ENCODE measurements at regions of chr20 and their contacts with region 1.

Region 1: GRCh38 chr20:35092524-35093266 is at the start of gene TRPC4AP:
- DNase-seq: peak; percentile 78 to 96 (median 86)
- ATAC-seq: peak; percentile 98
- H3K4me3 ChIP-seq: peak within 1 kb of the TSS; percentile 99
- H3K4me3 Mint-ChIP-seq: peak within 1 kb of the TSS; percentile 91
- H3K27ac ChIP-seq: peak within 1 kb of the TSS; percentile 72 to 76
- H3K27ac Mint-ChIP-seq: peak within 1 kb of the TSS; percentile 83
- H3K4me1 ChIP-seq: peaks cover 40% of the 10 kb centered on the region
- H3K4me1 Mint-ChIP-seq: peaks cover 53% of the 10 kb centered on the region
- H3K27me3 ChIP-seq: no peaks in the 10 kb centered on the region
- H3K27me3 Mint-ChIP-seq: no peaks in the 10 kb centered on the region
- CTCF ChIP-seq: peak; percentile 85
- total RNA-seq, gene TRPC4AP: 56.3 to 60.6 TPM

Region 2: DNA sequence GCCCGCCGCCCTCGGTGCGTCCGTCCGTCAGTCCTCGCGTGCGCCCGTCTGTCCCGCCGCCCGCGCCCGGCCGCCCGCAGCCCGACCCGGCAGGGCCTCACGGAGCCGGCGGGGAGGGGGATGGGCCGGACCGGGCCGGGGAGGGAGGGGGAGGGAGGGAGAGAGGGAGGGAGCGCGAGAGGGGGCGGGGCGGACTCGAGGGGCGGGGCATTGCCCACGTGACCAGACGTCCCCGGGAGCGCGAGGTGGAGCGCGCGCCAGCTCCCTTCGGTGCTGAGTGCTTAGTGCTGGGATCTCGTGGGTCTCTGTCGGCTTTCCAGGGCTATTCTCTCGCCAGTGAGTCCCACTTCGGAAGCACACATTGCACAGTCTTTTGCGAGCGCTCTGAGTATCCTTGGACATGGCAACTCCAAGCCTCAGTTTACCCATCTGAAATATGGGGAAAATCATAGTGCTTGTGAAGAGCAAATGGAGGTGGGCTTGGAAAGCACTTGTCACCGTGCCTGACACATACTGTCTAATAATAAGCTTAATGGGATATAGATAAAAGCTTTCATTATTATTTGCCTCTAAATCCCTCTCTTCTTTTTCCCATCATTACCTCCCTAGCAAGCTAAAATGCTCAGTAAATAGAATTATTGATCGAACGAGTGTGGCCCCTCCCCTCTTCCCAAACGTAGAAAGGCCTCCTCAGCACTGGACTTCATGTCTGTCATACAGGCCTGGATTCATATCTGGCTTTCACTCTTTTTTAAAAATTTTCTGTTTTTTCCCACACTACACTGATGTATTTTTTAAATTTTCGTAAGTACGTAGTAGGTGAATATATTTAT is 266.9 kb before region 1 on chr20 and contains the start of gene NCOA6:
- CTCF ChIA-PET with region 1: no interaction called
- POLR2A ChIA-PET with region 1: no interaction called
- intact Hi-C with region 1: loop called in 1 of 2 experiments (anchors 5 kb)
- DNase-seq: peak; percentile 77 to 95 (median 84)
- ATAC-seq: peak; percentile 75
- H3K4me3 ChIP-seq: peak within 1 kb of the TSS; percentile 70
- H3K4me3 Mint-ChIP-seq: peak within 1 kb of the TSS; percentile 99
- H3K27ac ChIP-seq: peak within 1 kb of the TSS; percentile 35 to 66
- H3K27ac Mint-ChIP-seq: peak within 1 kb of the TSS; percentile 92
- H3K4me1 ChIP-seq: peaks cover 35% of the 10 kb centered on the region
- H3K4me1 Mint-ChIP-seq: peaks cover 47% of the 10 kb centered on the region
- H3K27me3 ChIP-seq: no peaks in the 10 kb centered on the region
- H3K27me3 Mint-ChIP-seq: no peaks in the 10 kb centered on the region
- CTCF ChIP-seq: no peak
- total RNA-seq, gene NCOA6: 14.6 to 16.3 TPM

Region 3: DNA sequence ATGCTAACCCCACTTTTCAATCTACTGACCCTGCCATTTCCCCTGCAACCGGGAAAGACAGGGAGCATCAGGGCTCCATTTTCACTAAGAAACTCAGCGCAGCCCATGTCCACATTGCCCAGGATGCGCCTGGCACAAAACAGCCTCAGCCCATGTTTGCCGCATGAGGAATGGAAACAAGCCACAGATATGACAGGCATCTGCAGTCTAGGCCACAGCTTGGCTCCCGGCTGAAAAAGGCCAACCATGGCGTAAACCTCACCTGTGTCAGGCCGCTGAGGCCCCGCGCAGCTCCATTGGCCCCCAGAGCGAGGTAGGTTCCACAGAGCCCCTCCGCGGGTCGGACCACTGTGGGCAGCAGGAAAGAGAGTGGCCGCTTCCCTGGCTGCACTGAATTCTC is 241.7 kb before region 1 on chr20:
- CTCF ChIA-PET with region 1: no interaction called
- POLR2A ChIA-PET with region 1: no interaction called
- intact Hi-C with region 1: no loop called
- DNase-seq: no peak
- ATAC-seq: no peak
- H3K4me3 ChIP-seq: no peak overlapping the region
- H3K4me3 Mint-ChIP-seq: no peak overlapping the region
- H3K27ac ChIP-seq: no peak overlapping the region
- H3K27ac Mint-ChIP-seq: no peak overlapping the region
- H3K4me1 ChIP-seq: no peaks in the 10 kb centered on the region
- H3K4me1 Mint-ChIP-seq: no peaks in the 10 kb centered on the region
- H3K27me3 ChIP-seq: no peaks in the 10 kb centered on the region
- H3K27me3 Mint-ChIP-seq: no peaks in the 10 kb centered on the region
- CTCF ChIP-seq: no peak

Region 4: DNA sequence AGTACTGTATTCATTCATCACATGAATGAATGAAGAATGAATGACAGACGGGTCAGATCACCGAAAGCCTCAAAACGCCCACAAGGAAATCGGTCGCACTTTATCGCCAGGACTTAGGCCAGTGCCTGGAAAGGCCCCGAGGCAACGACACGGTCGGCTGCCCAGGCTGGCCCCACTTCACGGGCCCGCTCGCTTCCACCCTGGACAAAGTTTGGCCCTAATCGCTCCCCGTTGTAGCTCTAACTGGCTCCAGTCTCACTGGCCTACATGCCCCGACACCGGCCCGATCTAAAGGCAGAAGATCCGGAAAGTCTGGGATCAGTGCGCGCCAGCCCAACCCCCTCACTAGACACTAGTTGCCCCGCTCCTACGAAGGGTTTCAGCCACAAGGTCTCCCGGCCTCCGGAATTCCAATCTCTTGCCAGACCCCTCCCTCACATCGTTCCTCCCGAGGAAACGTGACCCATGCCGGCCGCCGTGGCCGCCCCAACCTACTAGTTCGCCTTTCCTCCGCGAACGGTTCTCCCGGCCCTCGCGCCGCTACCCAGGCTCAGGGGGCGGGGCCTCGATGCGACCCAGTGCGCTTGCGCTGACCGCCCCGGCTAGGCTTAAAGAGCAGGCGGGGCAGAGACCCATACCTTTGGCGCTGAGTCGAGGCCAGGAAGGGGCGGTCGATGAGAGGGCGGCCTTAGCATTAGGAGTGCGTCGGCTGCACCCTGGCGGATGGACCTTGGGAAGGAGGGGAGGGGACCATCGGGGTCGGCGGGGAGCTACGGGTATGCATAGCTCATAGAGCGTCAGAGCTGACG is 137.3 kb before region 1 on chr20 and contains the starts of genes GSS and MYH7B:
- CTCF ChIA-PET with region 1: interaction called, 5 read pairs
- POLR2A ChIA-PET with region 1: no interaction called
- intact Hi-C with region 1: loop called in 1 of 2 experiments (anchors 2 kb)
- DNase-seq: peak; percentile 90 to 98 (median 96)
- ATAC-seq: peak; percentile 92
- H3K4me3 ChIP-seq: peak within 1 kb of the TSS; percentile 87
- H3K4me3 Mint-ChIP-seq: peak within 1 kb of the TSS; percentile 94
- H3K27ac ChIP-seq: peak within 1 kb of the TSS; percentile 62 to 70
- H3K27ac Mint-ChIP-seq: peak within 1 kb of the TSS; percentile 91
- H3K4me1 ChIP-seq: peaks cover 19% of the 10 kb centered on the region
- H3K4me1 Mint-ChIP-seq: peaks cover 23% of the 10 kb centered on the region
- H3K27me3 ChIP-seq: no peaks in the 10 kb centered on the region
- H3K27me3 Mint-ChIP-seq: no peaks in the 10 kb centered on the region
- CTCF ChIP-seq: no peak
- total RNA-seq, gene GSS: 24.3 to 24.7 TPM
- total RNA-seq, gene MYH7B: 0.53 to 0.58 TPM

Region 5: DNA sequence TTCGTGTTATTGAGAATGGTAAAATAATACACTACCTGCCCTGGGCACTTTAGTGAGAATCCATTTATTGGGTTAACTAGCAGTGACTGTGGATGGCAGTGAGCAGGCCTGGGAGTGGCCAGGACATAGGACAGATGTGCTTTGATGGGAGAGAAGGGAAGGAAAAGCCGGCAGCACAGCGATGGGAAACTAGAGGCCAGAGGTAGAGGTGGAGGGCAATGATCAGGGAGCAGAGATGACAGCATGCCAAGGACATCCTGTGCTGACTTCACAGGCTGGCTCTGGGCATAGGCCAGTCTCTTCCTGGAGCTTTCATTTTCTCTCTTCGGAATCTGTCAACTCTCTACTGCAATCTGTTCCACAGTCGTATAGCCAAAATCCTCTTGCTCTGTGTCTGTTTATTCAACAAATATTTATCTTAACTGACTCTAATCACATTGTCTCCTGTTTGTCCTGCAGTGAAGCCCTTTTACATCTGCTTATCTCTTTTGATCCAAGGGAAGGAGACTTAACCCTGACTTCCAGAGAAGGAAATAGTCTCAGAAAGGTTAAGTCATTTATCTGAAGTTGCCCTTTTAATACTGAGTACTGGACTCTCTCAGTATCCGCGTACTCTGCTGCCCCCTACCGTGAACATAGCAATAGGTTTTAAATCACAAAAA is 115.4 kb after region 1 on chr20:
- CTCF ChIA-PET with region 1: interaction called, 6 read pairs
- POLR2A ChIA-PET with region 1: interaction called, 6 read pairs
- intact Hi-C with region 1: loop called (anchors 1 kb)
- DNase-seq: peak; percentile 52 to 85 (median 72)
- ATAC-seq: peak; percentile 82
- H3K4me3 ChIP-seq: no peak overlapping the region
- H3K4me3 Mint-ChIP-seq: no peak overlapping the region
- H3K27ac ChIP-seq: no peak overlapping the region
- H3K27ac Mint-ChIP-seq: no peak overlapping the region
- H3K4me1 ChIP-seq: no peaks in the 10 kb centered on the region
- H3K4me1 Mint-ChIP-seq: no peaks in the 10 kb centered on the region
- H3K27me3 ChIP-seq: no peaks in the 10 kb centered on the region
- H3K27me3 Mint-ChIP-seq: no peaks in the 10 kb centered on the region
- CTCF ChIP-seq: peak; percentile 81

Measured in CD4-positive, alpha-beta T cell (primary cell).